ENCODE measurements at regions of chr9 and their contacts with region 1.

Region 1: GRCh38 chr9:76980576-76980975 is 38.9 kb upstream of the FOXB2 start:
- DNase-seq: no peak
- ATAC-seq: no peak
- H3K4me3 ChIP-seq: no peak overlapping the region
- H3K27ac ChIP-seq: no peak overlapping the region
- H3K4me1 ChIP-seq: no peaks in the 10 kb centered on the region
- H3K27me3 ChIP-seq: peaks cover 6% of the 10 kb centered on the region
- CTCF ChIP-seq: no peak
- POLR2A ChIP-seq: no peak
- RAD21 ChIP-seq: no peak

Region 2: GRCh38 chr9:76761448-76761847 is 219.1 kb before region 1 on chr9:
- CTCF ChIA-PET with region 1: no interaction called
- POLR2A ChIA-PET with region 1: no interaction called
- dilution Hi-C with region 1: no loop called
- in situ Hi-C with region 1: no loop called
- intact Hi-C with region 1: no loop called
- DNase-seq: peak; percentile 7
- ATAC-seq: no peak; the same call in 1 of the 2 replicates
- H3K4me3 ChIP-seq: no peak overlapping the region
- H3K27ac ChIP-seq: no peak overlapping the region
- H3K4me1 ChIP-seq: no peaks in the 10 kb centered on the region
- H3K27me3 ChIP-seq: peaks cover 5% of the 10 kb centered on the region
- CTCF ChIP-seq: peak; percentile 50
- POLR2A ChIP-seq: no peak
- RAD21 ChIP-seq: peak; percentile 35

Region 3: GRCh38 chr9:76932757-76933156 is 47.8 kb before region 1 on chr9:
- CTCF ChIA-PET with region 1: no interaction called
- POLR2A ChIA-PET with region 1: interaction called, 5 read pairs
- dilution Hi-C with region 1: no loop called
- in situ Hi-C with region 1: no loop called
- intact Hi-C with region 1: loop called (anchors 5 kb)
- DNase-seq: peak; percentile 18
- ATAC-seq: peak; percentile 82
- H3K4me3 ChIP-seq: no peak overlapping the region
- H3K27ac ChIP-seq: no peak overlapping the region
- H3K4me1 ChIP-seq: no peaks in the 10 kb centered on the region
- H3K27me3 ChIP-seq: peaks cover 6% of the 10 kb centered on the region; the same call in 1 of the 2 replicates
- CTCF ChIP-seq: no peak
- POLR2A ChIP-seq: no peak
- RAD21 ChIP-seq: no peak

Region 4: GRCh38 chr9:76962732-76963131 is 17.8 kb before region 1 on chr9:
- CTCF ChIA-PET with region 1: no interaction called
- POLR2A ChIA-PET with region 1: interaction called, 10 read pairs
- dilution Hi-C with region 1: no loop called
- in situ Hi-C with region 1: no loop called
- intact Hi-C with region 1: no loop called
- DNase-seq: no peak
- ATAC-seq: no peak
- H3K4me3 ChIP-seq: no peak overlapping the region
- H3K27ac ChIP-seq: no peak overlapping the region
- H3K4me1 ChIP-seq: no peaks in the 10 kb centered on the region
- H3K27me3 ChIP-seq: peaks cover 3% of the 10 kb centered on the region
- CTCF ChIP-seq: no peak
- POLR2A ChIP-seq: no peak
- RAD21 ChIP-seq: no peak

Measured in IMR-90 (cell line).